ENCODE measurements at regions of chr5 and their contacts with region 1.

Region 1: GRCh38 chr5:105150315-105150714 is 1587.7 kb upstream of the NUDT12 start:
- DNase-seq: no peak
- H3K4me3 ChIP-seq: no peak overlapping the region
- H3K27ac ChIP-seq: no peak overlapping the region
- H3K4me1 ChIP-seq: no peaks in the 10 kb centered on the region
- H3K27me3 ChIP-seq: no peaks in the 10 kb centered on the region
- CTCF ChIP-seq: no peak

Region 2: DNA sequence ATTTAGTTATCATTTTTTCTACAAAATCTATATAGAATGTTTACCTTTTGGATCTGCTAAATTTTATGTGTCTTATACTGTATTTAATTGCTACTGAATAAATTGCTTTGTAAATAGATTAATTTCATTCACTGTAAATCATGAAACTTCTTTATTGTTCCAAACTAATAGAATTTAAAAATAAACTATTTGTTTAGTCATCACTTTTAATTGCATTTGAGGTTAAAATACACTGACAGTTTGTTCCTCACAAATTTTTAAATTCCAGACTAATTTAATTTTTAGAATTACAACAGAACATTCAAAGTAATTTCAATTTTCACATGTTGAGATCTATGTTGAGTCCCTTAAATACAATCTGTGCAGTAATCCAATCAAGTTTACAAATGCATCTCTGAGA is 45.5 kb after region 1 on chr5:
- CTCF ChIA-PET with region 1: no interaction called
- POLR2A ChIA-PET with region 1: no interaction called
- intact Hi-C with region 1: loop called (anchors 1 kb)
- DNase-seq: no peak
- H3K4me3 ChIP-seq: no peak overlapping the region
- H3K27ac ChIP-seq: no peak overlapping the region
- H3K4me1 ChIP-seq: no peaks in the 10 kb centered on the region
- H3K27me3 ChIP-seq: no peaks in the 10 kb centered on the region
- CTCF ChIP-seq: no peak

Region 3: GRCh38 chr5:105544300-105544699 is 394.0 kb after region 1 on chr5:
- CTCF ChIA-PET with region 1: no interaction called
- POLR2A ChIA-PET with region 1: no interaction called
- intact Hi-C with region 1: no loop called
- DNase-seq: no peak
- H3K4me3 ChIP-seq: no peak overlapping the region
- H3K27ac ChIP-seq: no peak overlapping the region
- H3K4me1 ChIP-seq: no peaks in the 10 kb centered on the region
- H3K27me3 ChIP-seq: no peaks in the 10 kb centered on the region
- CTCF ChIP-seq: no peak